ENCODE measurements at regions of chr7 and their contacts with region 1.

Region 1: DNA sequence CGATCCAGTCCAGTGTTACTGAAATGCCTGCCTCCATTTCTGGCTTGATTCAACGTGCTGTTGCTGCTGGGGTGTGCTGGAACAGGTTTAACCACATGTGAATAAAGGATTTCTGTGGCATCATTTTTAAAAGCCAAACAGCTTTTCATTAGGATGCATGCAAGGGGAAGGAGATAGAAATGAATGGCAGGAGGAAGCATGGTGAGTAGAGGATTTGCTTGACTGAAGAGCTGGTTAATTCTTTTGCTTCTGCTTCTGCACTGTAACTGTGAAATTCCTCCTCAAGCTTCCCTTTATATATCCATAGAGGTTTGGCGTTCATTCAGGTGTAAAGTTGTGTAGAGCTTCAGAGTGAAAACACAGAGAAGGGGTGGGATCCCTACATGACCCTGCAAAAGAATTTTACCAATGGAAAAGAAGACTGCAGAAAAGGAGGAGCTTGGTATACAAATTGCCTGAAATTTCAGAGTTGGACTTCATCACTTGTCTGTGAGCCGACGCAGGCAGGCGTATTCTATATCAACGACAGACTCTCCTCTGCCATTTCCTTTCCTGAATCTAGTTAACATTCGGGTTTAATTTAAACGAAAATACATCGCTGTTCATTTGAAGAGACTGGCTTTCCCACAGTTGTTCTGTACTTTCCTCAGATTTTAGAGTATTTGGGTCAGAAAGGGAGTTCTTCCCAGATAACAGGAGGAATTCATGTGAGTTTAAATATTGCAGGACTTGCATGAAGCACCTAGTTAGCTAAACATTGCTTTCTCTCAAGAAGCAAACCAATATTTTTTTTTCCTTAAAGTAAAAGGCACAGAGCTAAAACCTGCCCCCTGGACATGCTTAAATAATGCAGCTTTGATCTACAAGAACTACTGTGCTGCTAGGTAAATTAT is at the start of gene SOSTDC1:
- DNase-seq: no peak
- H3K4me3 ChIP-seq: no peak within 1 kb of the TSS
- H3K27me3 ChIP-seq: peaks cover 2% of the 10 kb centered on the region; the same call in 1 of the 2 replicates
- CTCF ChIP-seq: no peak
- polyA plus RNA-seq, gene SOSTDC1: not detected in 2 replicates

Region 2: GRCh38 chr7:16594061-16594460 is 128.3 kb after region 1 on chr7:
- CTCF ChIA-PET with region 1: no interaction called
- POLR2A ChIA-PET with region 1: interaction called, 14 read pairs
- DNase-seq: no peak
- H3K4me3 ChIP-seq: no peak overlapping the region
- H3K27me3 ChIP-seq: no peaks in the 10 kb centered on the region
- CTCF ChIP-seq: no peak

Measured in BJ (cell line).